ENCODE measurements at regions of chr3 and their contacts with region 1.

Region 1: DNA sequence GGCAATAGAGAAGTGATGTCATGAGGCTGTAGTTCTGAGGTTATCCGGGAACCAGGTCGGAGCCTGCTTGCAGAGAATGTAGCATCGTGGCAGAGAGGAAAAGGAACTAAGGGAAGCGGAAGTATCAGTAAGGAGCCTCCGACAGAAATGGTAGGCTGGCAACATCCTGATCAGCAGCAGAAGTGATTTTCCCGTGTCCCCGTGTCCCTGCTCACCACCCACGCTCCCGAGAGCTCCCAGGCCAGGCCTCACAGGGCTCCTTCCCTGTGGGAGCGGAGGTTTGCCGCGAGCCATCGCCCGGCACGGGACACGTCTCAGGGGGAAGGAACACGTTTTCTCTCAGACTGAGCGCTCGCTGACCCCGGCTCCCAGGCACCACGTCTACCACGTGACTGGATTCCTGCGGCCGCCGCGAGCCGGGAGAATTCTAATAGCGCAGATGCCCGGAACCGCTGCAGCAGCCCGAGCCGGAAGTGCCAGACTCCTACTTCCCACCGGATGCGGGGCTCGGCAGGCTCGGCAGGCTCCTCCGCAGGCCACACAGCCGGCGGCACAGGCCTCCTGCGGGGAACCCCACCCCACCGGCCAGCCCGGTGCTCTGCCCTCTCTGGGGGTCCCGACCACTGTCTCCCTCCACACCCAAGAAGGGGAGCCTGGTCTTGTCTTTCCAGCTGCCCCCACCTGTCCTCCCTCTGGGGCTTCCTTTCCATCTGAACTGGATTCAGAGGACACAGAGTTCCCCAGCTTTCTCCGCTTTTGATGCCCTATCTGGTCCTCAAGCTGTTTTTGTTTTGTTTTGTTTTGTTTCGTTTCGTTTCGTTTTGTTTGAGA is 99.3 kb downstream of the BDH1 start:
- DNase-seq: peak; percentile 73
- H3K4me3 ChIP-seq: peak overlapping the region; percentile 22 to 47 (median 38)
- H3K27ac ChIP-seq: peak overlapping the region; percentile 23
- H3K4me1 ChIP-seq: peaks cover 11% of the 10 kb centered on the region
- H3K27me3 ChIP-seq: no peaks in the 10 kb centered on the region
- CTCF ChIP-seq: no peak

Region 2: GRCh38 chr3:197168606-197169005 is 287.9 kb before region 1 on chr3:
- CTCF ChIA-PET with region 1: no interaction called
- dilution Hi-C with region 1: no loop called
- in situ Hi-C with region 1: no loop called
- intact Hi-C with region 1: no loop called
- DNase-seq: no peak
- H3K4me3 ChIP-seq: no peak overlapping the region
- H3K27ac ChIP-seq: no peak overlapping the region
- H3K4me1 ChIP-seq: peaks cover 4% of the 10 kb centered on the region
- H3K27me3 ChIP-seq: no peaks in the 10 kb centered on the region
- CTCF ChIP-seq: no peak

Region 3: DNA sequence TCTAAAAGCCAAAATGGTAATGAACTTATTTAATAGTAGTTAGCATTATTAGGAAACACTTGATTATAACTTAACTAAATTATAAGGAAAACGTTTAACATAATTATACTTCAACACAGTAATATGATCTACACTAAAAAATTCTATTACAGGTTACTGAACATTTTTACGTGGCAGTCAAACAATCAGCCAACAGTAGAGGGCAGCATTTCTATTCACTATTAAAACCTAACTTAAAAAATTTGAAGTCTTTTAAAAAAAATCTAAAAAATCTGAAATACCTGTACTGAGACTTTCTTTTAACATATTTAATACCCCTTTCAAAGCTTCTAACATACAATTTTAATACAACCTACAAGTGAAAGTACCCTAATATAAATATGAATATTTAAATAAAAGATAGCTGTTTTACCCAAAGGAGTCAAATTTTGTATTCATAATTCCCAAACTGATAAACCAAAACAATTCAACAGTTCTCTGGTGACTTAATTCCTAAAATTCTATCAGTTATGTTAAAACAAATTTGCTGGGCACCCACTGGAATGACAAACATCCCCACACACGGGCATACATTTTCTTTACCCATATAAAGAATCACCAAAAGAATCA is 199.5 kb before region 1 on chr3:
- CTCF ChIA-PET with region 1: interaction called, 5 read pairs
- dilution Hi-C with region 1: no loop called
- in situ Hi-C with region 1: no loop called
- intact Hi-C with region 1: loop called (anchors 1 kb)
- DNase-seq: peak; percentile 24
- H3K4me3 ChIP-seq: no peak overlapping the region
- H3K27ac ChIP-seq: peak overlapping the region; percentile 43
- H3K4me1 ChIP-seq: peaks cover 19% of the 10 kb centered on the region
- H3K27me3 ChIP-seq: no peaks in the 10 kb centered on the region
- CTCF ChIP-seq: peak; percentile 62 to 70

Region 4: DNA sequence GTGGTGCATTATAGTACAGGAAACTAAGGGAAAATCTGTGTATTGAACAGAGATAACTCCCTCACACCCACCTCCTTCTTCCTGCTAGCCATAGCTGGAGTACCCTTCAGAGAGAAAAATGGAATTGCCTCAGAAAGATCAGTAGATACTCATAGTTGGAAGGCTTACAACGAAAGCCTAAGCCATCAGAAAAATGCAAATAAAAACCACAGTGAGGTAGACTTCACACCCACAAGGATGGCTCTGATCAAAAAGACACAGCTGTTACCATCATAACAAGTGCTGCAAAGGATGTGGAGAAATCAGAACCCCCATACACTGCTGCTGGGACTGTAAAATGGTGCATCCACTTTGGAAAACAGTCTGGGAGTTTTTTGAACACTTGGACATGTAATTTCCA is 150.6 kb before region 1 on chr3:
- CTCF ChIA-PET with region 1: no interaction called
- dilution Hi-C with region 1: loop called (anchors 10 kb)
- in situ Hi-C with region 1: no loop called
- intact Hi-C with region 1: no loop called
- DNase-seq: peak; percentile 32
- H3K4me3 ChIP-seq: no peak overlapping the region
- H3K27ac ChIP-seq: peak overlapping the region; percentile 66
- H3K4me1 ChIP-seq: peaks cover 57% of the 10 kb centered on the region
- H3K27me3 ChIP-seq: no peaks in the 10 kb centered on the region
- CTCF ChIP-seq: no peak

Region 5: GRCh38 chr3:197372047-197372666 is 84.3 kb before region 1 on chr3:
- CTCF ChIA-PET with region 1: no interaction called
- dilution Hi-C with region 1: no loop called
- in situ Hi-C with region 1: no loop called
- intact Hi-C with region 1: loop called (anchors 5 kb)
- DNase-seq: peak; percentile 93
- H3K4me3 ChIP-seq: no peak overlapping the region
- H3K27ac ChIP-seq: peak overlapping the region; percentile 63
- H3K4me1 ChIP-seq: peaks cover 56% of the 10 kb centered on the region
- H3K27me3 ChIP-seq: no peaks in the 10 kb centered on the region
- CTCF ChIP-seq: no peak

Region 6: DNA sequence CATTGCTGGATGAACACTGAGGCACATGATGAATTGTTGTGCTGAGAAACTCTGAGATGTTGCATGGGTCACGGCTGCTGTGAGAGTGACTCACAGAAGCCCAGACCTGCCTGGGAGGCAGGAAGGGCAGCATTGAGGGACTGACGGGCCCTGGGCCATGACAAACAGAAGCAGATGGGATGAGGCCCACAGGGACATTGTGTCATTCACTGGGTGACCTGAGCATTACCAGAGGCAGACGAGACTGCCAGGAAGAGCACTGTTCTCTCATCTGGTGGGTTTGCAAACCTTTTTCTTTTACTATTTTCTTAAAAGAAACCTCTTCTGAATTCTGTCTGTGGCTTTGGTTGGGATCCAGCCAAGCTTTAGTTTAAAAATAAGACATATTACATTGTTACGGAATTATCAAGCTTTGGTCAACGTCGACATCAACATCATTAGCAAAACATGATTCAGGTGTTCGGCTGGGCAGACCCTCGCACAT is 31.5 kb after region 1 on chr3:
- CTCF ChIA-PET with region 1: interaction called, 5 read pairs
- dilution Hi-C with region 1: no loop called
- in situ Hi-C with region 1: no loop called
- intact Hi-C with region 1: loop called (anchors 2 kb)
- DNase-seq: peak; percentile 94
- H3K4me3 ChIP-seq: no peak overlapping the region
- H3K27ac ChIP-seq: peak overlapping the region; percentile 72
- H3K4me1 ChIP-seq: peaks cover 47% of the 10 kb centered on the region
- H3K27me3 ChIP-seq: no peaks in the 10 kb centered on the region
- CTCF ChIP-seq: no peak